ENCODE measurements at regions of chr17 and their contacts with region 1.

Region 1: DNA sequence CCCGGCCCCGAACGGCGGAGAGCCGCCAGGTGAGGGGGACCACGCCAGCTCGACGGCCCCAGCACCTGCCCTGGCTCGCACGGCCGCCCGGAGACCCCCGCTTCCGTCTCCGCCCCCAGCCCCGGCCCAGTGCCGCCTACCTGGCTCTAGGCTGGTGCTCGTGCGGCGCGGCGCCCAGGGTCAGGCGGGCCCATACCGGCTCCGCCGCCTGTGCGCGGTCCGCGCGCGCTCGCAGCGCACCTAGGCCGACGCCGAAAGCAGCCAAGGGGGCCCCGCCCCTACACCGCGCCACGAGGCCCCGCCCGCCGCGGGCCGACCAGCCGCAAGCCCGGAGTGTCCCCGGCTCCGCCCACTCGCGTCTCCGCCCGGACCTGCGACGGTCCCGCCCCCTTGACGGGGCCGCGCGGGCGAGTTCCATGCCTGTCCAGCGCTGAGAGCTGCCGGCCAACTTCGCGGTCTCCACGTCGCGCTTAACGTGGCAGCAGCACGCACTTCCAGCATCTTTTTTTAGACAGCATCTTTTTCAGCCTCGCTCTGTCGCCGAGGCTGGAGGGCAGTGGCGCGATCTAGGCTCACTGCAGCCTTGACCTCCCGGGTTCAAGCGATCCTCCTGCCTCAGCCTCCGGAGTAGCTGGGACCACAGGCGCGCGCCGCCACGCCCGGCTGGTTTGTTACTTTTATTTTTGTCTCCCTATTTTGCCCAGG is at the start of gene SLC25A39:
- DNase-seq: peak; percentile 96
- H3K4me3 ChIP-seq: peak within 1 kb of the TSS; percentile 97
- H3K27ac ChIP-seq: peak within 1 kb of the TSS; percentile 91
- H3K4me1 ChIP-seq: peaks cover 34% of the 10 kb centered on the region
- CTCF ChIP-seq: no peak
- total RNA-seq, gene SLC25A39: 135 and 156 TPM in 2 replicates

Region 2: DNA sequence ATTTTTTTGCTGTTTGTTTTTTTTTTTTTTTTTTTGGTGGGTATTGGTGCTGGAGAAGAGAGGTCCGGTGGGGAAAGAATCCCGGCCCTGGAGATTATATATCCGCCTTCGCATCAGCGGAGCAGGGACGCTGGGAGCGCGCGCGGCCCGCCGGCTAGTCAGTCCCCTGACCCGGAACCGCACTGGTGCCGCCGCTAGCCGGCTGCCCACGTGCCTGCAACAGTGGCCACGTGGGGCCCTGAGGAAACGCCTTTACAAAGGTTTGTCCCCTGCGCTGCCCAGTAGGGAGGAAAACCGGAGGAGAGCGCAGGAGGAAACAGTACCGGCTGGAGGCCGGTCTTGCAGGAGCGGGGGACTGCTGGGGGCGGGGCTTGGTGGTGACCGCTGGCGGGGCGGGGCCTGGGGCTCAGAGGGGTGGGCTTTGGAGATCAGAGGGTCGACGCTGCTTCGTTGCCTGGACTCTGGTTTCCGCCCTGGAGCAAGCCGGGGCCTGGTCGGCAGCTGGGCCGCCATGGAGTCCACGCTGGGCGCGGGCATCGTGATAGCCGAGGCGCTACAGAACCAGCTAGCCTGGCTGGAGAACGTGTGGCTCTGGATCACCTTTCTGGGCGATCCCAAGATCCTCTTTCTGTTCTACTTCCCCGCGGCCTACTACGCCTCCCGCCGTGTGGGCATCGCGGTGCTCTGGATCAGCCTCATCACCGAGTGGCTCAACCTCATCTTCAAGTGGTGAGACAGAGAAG is 254.1 kb before region 1 on chr17 and contains the start of gene G6PC3:
- CTCF ChIA-PET with region 1: no interaction called
- POLR2A ChIA-PET with region 1: no interaction called
- intact Hi-C with region 1: loop called (anchors 10 kb)
- DNase-seq: peak; percentile 89
- H3K4me3 ChIP-seq: peak within 1 kb of the TSS; percentile 76
- H3K27ac ChIP-seq: peak within 1 kb of the TSS; percentile 67
- H3K4me1 ChIP-seq: peaks cover 31% of the 10 kb centered on the region
- CTCF ChIP-seq: no peak
- total RNA-seq, gene G6PC3: 10.7 and 20.6 TPM in 2 replicates

Region 3: DNA sequence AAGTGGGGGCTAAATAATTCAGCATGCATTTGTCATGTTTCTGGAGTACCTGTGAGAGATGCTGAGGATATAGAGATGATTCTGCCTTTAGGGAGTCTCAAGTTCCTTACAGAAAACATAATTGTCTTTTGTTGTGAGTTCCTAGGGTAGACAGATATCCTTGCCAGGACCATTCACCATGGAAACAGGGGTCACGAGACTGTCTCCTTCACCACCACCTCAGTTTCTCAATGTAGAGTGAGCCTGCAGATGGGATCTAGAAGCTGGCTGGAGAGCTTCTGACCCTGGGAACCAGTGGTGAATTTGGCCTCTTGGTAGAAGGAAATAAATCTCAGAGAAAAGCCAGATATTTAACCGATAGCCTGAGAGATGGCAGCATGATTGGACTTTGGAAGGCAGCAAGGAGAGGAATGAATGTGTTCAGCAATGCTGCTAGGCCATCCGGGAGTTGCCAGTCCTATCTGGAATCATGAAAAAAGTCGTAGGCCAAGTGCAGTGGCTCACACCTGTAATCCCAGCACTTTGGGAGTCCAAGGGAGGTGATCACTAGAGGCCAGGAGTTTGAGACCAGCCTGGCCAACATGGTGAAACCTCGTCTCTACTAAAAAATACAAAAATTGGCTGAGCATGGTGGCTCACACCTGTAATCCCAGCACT is 193.9 kb before region 1 on chr17:
- CTCF ChIA-PET with region 1: no interaction called
- POLR2A ChIA-PET with region 1: no interaction called
- intact Hi-C with region 1: no loop called
- DNase-seq: no peak
- H3K4me3 ChIP-seq: no peak overlapping the region
- H3K27ac ChIP-seq: no peak overlapping the region
- H3K4me1 ChIP-seq: peaks cover 3% of the 10 kb centered on the region
- CTCF ChIP-seq: no peak

Region 4: GRCh38 chr17:44141717-44142285 is 182.9 kb before region 1 on chr17 and contains the start of gene HROB:
- CTCF ChIA-PET with region 1: no interaction called
- POLR2A ChIA-PET with region 1: no interaction called
- intact Hi-C with region 1: loop called (anchors 5 kb)
- DNase-seq: peak; percentile 97
- H3K4me3 ChIP-seq: peak within 1 kb of the TSS; percentile 90
- H3K27ac ChIP-seq: peak within 1 kb of the TSS; percentile 63
- H3K4me1 ChIP-seq: peaks cover 27% of the 10 kb centered on the region
- CTCF ChIP-seq: peak; percentile 84
- total RNA-seq, gene HROB: 10.9 and 13.3 TPM in 2 replicates

Region 5: DNA sequence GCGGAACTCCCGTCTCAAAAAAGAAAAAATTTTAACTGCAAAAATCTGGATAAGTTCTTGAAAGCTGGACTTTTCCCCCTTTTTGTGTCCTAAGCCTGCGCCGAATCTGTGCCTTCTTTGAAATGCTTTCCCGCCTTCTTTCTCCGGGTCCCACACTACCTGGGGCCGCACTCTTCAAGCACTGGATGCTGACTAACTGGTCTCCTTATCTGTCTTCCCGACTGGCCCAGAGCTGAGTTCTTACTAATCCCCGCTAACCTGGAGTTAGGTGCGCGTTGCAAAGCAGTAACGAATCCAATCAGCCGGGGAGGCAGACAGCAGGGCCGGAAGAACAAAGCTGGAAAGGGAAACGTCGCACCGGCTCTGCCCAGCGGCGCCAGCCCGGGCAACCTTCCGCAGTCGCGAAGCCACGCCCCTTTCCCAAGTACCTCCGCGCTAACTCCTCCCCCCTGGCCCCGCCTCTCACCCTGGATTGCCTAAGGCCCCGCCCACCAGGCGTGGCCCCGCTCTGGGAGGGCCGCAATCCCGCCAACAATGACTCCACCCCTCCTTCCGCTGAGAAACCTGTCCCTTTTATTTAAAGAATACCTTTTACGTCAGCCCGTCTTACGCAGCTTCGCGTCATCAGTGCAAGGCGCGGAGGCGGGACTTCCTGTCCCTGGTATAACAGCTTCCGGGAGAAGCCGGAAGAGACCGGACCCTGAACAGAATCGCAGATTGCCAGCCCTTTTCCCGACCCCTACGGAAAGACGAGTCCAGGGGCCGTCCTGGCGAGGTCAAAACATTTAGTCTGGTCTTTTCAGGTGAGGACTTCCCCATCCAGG is 138.2 kb before region 1 on chr17 and contains the start of gene TMUB2:
- CTCF ChIA-PET with region 1: no interaction called
- POLR2A ChIA-PET with region 1: no interaction called
- intact Hi-C with region 1: no loop called
- DNase-seq: peak; percentile 100
- H3K4me3 ChIP-seq: peak within 1 kb of the TSS; percentile 76
- H3K27ac ChIP-seq: peak within 1 kb of the TSS; percentile 68
- H3K4me1 ChIP-seq: peaks cover 26% of the 10 kb centered on the region
- CTCF ChIP-seq: no peak
- total RNA-seq, gene TMUB2: 16.0 and 21.3 TPM in 2 replicates

Region 6: DNA sequence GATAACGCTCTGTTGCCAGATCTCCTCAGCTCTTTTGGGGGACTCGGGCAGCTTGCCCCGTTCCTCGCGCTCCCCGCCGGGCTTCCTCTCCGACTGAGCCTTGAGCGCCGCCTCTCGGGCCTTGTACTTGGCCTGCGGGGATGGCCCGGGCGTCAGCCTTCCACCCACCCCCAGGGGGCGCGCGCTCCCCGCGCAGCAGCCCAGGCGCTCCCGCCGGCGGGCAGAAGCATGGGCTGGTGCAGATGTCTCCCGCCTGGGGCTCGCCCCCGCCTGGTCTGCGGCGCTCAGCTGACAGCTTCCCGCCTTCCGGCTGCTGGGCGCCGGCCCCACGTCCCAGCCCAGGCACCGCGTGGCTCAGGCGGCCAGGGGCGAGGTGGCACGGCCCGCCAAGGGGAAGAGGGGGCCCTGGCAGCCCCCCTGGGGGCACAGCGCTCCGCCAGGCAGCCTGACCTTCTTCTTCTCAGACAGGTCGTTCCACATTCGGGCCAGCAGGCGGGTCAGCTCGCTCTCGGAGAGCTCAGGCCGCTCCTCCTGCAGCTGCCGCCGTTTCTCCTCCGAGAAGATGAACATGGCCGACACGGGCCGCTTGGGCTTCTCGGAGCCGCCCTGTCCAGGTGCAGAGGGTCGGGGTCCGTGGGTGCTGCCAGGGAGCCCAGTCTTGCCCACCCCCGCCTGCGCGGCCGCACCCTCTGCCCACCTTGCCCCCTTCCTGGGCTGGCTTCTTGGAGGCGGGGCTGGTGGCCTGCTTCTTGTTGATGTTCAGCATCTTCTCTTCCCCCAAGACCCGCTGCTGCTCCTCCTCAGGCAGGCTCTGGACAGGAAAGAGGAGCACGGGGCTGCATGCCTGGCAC is 114.2 kb before region 1 on chr17:
- CTCF ChIA-PET with region 1: interaction called, 4 read pairs
- POLR2A ChIA-PET with region 1: interaction called, 3 read pairs
- intact Hi-C with region 1: loop called (anchors 2 kb)
- DNase-seq: peak; percentile 94
- H3K4me3 ChIP-seq: peak overlapping the region; percentile 52
- H3K27ac ChIP-seq: peak overlapping the region; percentile 76
- H3K4me1 ChIP-seq: peaks cover 37% of the 10 kb centered on the region
- CTCF ChIP-seq: peak; percentile 94

Region 7: GRCh38 chr17:44350733-44351226 is 26.1 kb after region 1 on chr17:
- CTCF ChIA-PET with region 1: interaction called, 6 read pairs
- POLR2A ChIA-PET with region 1: interaction called, 3 read pairs
- intact Hi-C with region 1: loop called (anchors 1 kb)
- DNase-seq: peak; percentile 84
- H3K4me3 ChIP-seq: no peak overlapping the region
- H3K27ac ChIP-seq: no peak overlapping the region
- H3K4me1 ChIP-seq: peaks cover 62% of the 10 kb centered on the region
- CTCF ChIP-seq: peak; percentile 87

Region 8: GRCh38 chr17:44518032-44518431 is 193.3 kb after region 1 on chr17:
- CTCF ChIA-PET with region 1: no interaction called
- POLR2A ChIA-PET with region 1: no interaction called
- intact Hi-C with region 1: no loop called
- DNase-seq: no peak
- H3K4me3 ChIP-seq: no peak overlapping the region
- H3K27ac ChIP-seq: no peak overlapping the region
- H3K4me1 ChIP-seq: no peaks in the 10 kb centered on the region
- CTCF ChIP-seq: no peak